ENCODE measurements at regions of chr14 and their contacts with region 1.

Region 1: DNA sequence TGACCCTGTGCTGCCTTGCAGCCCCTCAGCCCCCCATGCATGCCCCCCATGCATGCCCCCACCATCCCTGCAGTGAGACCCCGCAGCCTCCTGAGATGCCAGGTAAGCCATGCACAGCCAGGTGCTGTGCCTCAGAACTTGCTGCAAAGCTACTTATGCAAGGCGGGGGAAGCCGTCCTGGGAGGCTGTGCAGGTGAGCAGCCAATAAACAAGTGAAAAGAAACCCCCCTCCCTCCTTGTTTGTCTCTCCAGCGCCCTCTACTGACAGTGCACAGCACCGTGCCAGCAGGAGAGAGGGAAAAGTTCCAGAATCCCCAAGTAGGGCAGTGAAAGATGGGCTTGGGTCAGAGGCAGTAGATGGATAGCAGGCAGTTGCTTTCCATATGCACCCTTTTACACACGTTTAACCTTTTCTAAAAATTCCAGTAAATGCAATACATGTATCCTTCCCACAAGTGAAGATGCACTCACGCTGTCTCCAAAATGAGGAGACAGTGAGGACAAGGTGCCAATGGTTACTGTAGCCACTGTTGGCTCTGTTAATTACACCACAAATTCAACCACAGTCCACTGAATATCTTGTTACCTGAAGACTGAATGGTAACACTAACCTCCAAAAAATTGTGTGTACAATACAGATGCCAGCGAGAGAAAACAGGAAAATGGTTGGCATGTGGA is 18.0 kb downstream of the TNFAIP2 start:
- DNase-seq: peak; percentile 58 to 75 (median 71)
- H3K4me3 ChIP-seq: no peak overlapping the region
- H3K27ac ChIP-seq: no peak overlapping the region
- H3K4me1 ChIP-seq: peaks cover 0 to 14% (median 7%) of the 10 kb centered on the region in 4 experiments
- H3K27me3 ChIP-seq: peaks cover 0 to 39% (median 6%) of the 10 kb centered on the region in 5 experiments

Region 2: GRCh38 chr14:103130965-103131364 is 10.3 kb before region 1 on chr14:
- CTCF ChIA-PET with region 1: interaction called, 11 read pairs
- POLR2A ChIA-PET with region 1: no interaction called
- DNase-seq: no peak
- H3K4me3 ChIP-seq: no peak overlapping the region
- H3K27ac ChIP-seq: no peak overlapping the region
- H3K4me1 ChIP-seq: no peaks in the 10 kb centered on the region
- H3K27me3 ChIP-seq: no peaks in the 10 kb centered on the region